ENCODE measurements at regions of chr11 and their contacts with region 1.

Region 1: GRCh38 chr11:34380696-34381095 is 22.9 kb upstream of the ABTB2 start:
- DNase-seq: no peak
- ATAC-seq: no peak
- H3K4me3 ChIP-seq: no peak overlapping the region
- H3K27ac ChIP-seq: no peak overlapping the region
- H3K4me1 ChIP-seq: no peaks in the 10 kb centered on the region
- H3K27me3 ChIP-seq: no peaks in the 10 kb centered on the region
- CTCF ChIP-seq: no peak

Region 2: DNA sequence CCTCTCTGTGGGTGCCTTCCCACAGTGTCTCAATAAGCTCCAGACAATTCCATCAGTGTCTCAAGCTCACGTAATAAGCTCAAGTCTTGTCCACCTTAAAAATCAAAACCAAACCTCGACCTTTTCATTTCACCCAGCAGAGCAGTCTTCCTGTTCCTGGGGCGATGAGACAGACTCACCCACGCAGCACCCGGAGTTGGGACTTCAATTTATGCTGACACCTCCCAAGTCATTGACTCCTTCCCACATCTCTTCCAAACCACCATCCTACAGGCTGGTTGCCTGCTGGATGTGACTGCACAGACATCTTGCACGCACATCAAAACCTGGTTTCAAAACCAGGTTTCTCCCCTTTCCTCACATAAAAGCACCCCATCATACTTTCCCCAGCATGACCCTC is 561.4 kb before region 1 on chr11:
- intact Hi-C with region 1: loop called in 1 of 10 experiments (anchors 10 kb)
- DNase-seq: no peak
- ATAC-seq: no peak
- H3K4me3 ChIP-seq: no peak overlapping the region
- H3K27ac ChIP-seq: no peak overlapping the region
- H3K4me1 ChIP-seq: no peaks in the 10 kb centered on the region
- H3K27me3 ChIP-seq: peaks cover 4 to 44% (median 30%) of the 10 kb centered on the region in 7 donors
- CTCF ChIP-seq: no peak

Region 3: GRCh38 chr11:34013898-34014571 is 366.7 kb before region 1 on chr11:
- intact Hi-C with region 1: loop called in 1 of 10 experiments (anchors 10 kb)
- DNase-seq: no peak
- ATAC-seq: peak in 2 of 8 donors; percentile 78 to 85
- H3K4me3 ChIP-seq: no peak overlapping the region
- H3K27ac ChIP-seq: peak overlapping the region in 2 of 10 donors; percentile 14 to 15
- H3K4me1 ChIP-seq: peaks cover 0 to 7% (median 0%) of the 10 kb centered on the region in 9 donors
- H3K27me3 ChIP-seq: no peaks in the 10 kb centered on the region
- CTCF ChIP-seq: no peak

Region 4: DNA sequence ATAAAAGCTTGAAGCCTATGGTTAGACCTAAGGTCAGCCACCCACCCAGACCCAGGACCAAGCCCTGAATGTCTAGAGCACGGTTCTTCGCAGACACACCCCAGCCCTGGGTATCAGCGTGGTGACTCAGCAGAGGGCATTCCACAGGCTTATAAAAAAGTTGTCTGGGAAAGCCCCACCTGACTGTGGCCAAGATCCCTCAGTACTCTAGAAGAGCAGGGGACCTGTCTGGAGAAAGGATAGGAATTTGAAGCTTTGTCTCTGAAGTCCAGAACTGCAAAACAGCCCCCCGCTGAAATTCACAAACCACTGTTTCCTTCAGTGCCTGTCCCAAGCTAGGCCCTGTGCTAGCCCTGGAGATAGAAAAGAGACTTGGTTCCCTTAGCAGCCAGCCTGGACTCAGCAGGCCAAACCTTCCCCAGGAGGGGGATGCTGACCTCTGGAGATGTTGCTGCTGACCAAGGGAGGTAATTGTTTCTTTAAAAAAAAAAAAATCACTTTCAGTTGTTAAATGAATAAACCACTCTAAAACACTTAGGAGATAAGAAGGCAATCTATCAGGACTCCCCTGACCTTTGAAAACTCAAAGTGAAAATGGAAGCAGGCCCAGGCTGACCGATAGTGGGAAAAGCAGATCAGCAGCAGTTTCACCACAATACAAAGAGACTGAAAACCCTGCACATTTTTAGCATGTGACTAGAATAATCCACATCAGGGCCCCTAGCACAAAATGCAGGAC is 136.8 kb before region 1 on chr11:
- intact Hi-C with region 1: no loop called
- DNase-seq: no peak
- ATAC-seq: peak in 5 of 8 donors; percentile 21 to 77 (median 60)
- H3K4me3 ChIP-seq: no peak overlapping the region
- H3K27ac ChIP-seq: peak overlapping the region in 6 of 10 donors; percentile 4 to 48 (median 35)
- H3K4me1 ChIP-seq: peaks cover 4 to 43% (median 24%) of the 10 kb centered on the region in 9 donors
- H3K27me3 ChIP-seq: no peaks in the 10 kb centered on the region
- CTCF ChIP-seq: no peak

Region 5: GRCh38 chr11:34331329-34331728 is 49.4 kb before region 1 on chr11:
- intact Hi-C with region 1: no loop called
- DNase-seq: no peak
- ATAC-seq: no peak
- H3K4me3 ChIP-seq: no peak overlapping the region
- H3K27ac ChIP-seq: no peak overlapping the region
- H3K4me1 ChIP-seq: peaks cover 7 to 54% (median 34%) of the 10 kb centered on the region in 9 donors
- H3K27me3 ChIP-seq: no peaks in the 10 kb centered on the region
- CTCF ChIP-seq: no peak

Region 6: DNA sequence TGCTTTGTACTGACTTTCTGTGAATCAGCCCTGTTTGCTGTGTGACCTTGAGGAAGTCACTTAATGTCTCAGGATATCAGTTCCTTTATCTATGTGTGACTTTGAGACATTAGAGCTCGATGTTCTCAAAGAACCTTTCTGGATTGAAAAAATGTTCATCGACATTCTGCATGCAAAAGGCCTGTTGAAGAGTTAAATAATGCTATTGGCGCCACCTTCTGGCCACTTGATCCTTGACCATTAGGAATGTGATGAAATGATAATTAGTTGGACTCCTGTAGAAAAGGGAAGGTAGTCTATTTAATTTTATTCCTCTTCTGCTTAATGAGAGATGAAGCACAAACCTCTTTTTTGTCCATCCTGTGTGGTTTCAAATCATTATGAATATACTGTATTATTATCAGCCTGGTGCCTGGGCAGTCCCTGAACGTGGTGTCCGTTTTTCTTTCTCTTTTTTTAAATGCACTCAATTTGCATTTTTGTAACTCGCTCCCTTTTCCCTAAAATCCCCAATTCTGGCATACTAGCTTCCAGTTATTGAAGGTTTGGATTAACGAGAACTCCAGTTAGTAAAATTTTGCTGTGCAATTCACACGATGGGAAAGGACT is 112.2 kb after region 1 on chr11:
- intact Hi-C with region 1: no loop called
- DNase-seq: peak in 1 of 2 donors; percentile 41
- ATAC-seq: no peak
- H3K4me3 ChIP-seq: no peak overlapping the region
- H3K27ac ChIP-seq: no peak overlapping the region
- H3K4me1 ChIP-seq: no peaks in the 10 kb centered on the region
- H3K27me3 ChIP-seq: peaks cover 0 to 19% (median 7%) of the 10 kb centered on the region in 7 donors
- CTCF ChIP-seq: peak; percentile 47 to 77 (median 70)

Region 7: GRCh38 chr11:34585735-34586487 is 205.2 kb after region 1 on chr11:
- intact Hi-C with region 1: no loop called
- DNase-seq: no peak
- ATAC-seq: peak in 5 of 8 donors; percentile 13 to 51 (median 28)
- H3K4me3 ChIP-seq: peak overlapping the region in 4 of 10 donors; percentile 24 to 32 (median 24)
- H3K27ac ChIP-seq: no peak overlapping the region
- H3K4me1 ChIP-seq: peaks cover 0 to 13% (median 6%) of the 10 kb centered on the region in 9 donors
- H3K27me3 ChIP-seq: peaks cover 0 to 7% (median 2%) of the 10 kb centered on the region in 7 donors
- CTCF ChIP-seq: peak; percentile 49 to 78 (median 71)